ENCODE measurements at regions of chr2 and their contacts with region 1.

Region 1: DNA sequence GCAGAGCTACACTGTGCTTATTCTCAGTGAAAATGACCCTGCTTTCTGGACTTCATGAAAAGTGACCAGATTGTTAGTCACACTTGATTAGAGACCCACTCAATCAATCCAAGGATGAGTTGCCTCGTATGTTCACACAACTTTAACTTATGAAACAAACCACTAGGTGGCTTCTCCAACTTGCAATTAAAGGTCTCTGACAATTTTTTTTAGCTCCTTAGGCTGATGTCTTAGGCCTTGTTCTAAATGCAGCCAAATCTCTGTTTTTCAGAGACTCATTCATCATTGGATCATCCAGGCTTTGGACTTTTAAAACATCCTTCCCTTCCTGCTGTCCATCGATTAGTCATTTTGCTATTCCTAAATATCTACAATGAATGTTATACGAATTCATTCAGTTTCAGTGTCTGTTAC is 63.4 kb downstream of the MREG start:
- DNase-seq: peak; percentile 52
- H3K4me3 ChIP-seq: no peak overlapping the region
- H3K27ac ChIP-seq: no peak overlapping the region
- H3K4me1 ChIP-seq: no peaks in the 10 kb centered on the region
- H3K27me3 ChIP-seq: no peaks in the 10 kb centered on the region
- CTCF ChIP-seq: peak; percentile 35 to 50
- POLR2A ChIP-seq: no peak

Region 2: GRCh38 chr2:215579809-215580208 is 370.2 kb before region 1 on chr2:
- CTCF ChIA-PET with region 1: no interaction called
- POLR2A ChIA-PET with region 1: no interaction called
- dilution Hi-C with region 1: no loop called
- intact Hi-C with region 1: no loop called
- DNase-seq: no peak
- H3K4me3 ChIP-seq: no peak overlapping the region
- H3K27ac ChIP-seq: no peak overlapping the region
- H3K4me1 ChIP-seq: no peaks in the 10 kb centered on the region
- H3K27me3 ChIP-seq: no peaks in the 10 kb centered on the region
- CTCF ChIP-seq: no peak
- POLR2A ChIP-seq: no peak

Region 3: GRCh38 chr2:215851082-215851481 is 98.9 kb before region 1 on chr2:
- CTCF ChIA-PET with region 1: no interaction called
- POLR2A ChIA-PET with region 1: no interaction called
- dilution Hi-C with region 1: no loop called
- intact Hi-C with region 1: no loop called
- DNase-seq: peak; percentile 92
- H3K4me3 ChIP-seq: no peak overlapping the region
- H3K27ac ChIP-seq: peak overlapping the region; percentile 98
- H3K4me1 ChIP-seq: peaks cover 48% of the 10 kb centered on the region
- H3K27me3 ChIP-seq: no peaks in the 10 kb centered on the region
- CTCF ChIP-seq: no peak
- POLR2A ChIP-seq: peak; percentile 31

Region 4: GRCh38 chr2:216006164-216006663 is 56.2 kb after region 1 on chr2:
- CTCF ChIA-PET with region 1: interaction called, 12 read pairs
- POLR2A ChIA-PET with region 1: no interaction called
- dilution Hi-C with region 1: no loop called
- intact Hi-C with region 1: no loop called
- DNase-seq: peak; percentile 33
- H3K4me3 ChIP-seq: no peak overlapping the region
- H3K27ac ChIP-seq: no peak overlapping the region
- H3K4me1 ChIP-seq: peaks cover 8% of the 10 kb centered on the region
- H3K27me3 ChIP-seq: peaks cover 0 to 2% of the 10 kb centered on the region in 2 experiments
- CTCF ChIP-seq: no peak
- POLR2A ChIP-seq: no peak

Region 5: GRCh38 chr2:216013080-216013909 is 63.3 kb after region 1 on chr2 and contains the start of gene MREG:
- CTCF ChIA-PET with region 1: interaction called, 107 read pairs
- POLR2A ChIA-PET with region 1: no interaction called
- dilution Hi-C with region 1: no loop called
- intact Hi-C with region 1: loop called (anchors 1 kb)
- DNase-seq: peak; percentile 63
- H3K4me3 ChIP-seq: peak within 1 kb of the TSS; percentile 62 to 80 (median 72)
- H3K27ac ChIP-seq: no peak within 1 kb of the TSS
- H3K4me1 ChIP-seq: peaks cover 7% of the 10 kb centered on the region
- H3K27me3 ChIP-seq: no peaks in the 10 kb centered on the region
- CTCF ChIP-seq: peak; percentile 60 to 81
- POLR2A ChIP-seq: no peak
- total RNA-seq, gene MREG: 3.1 and 3.9 TPM in 2 replicates